ENCODE measurements at regions of chr22 and their contacts with region 1.

Region 1: DNA sequence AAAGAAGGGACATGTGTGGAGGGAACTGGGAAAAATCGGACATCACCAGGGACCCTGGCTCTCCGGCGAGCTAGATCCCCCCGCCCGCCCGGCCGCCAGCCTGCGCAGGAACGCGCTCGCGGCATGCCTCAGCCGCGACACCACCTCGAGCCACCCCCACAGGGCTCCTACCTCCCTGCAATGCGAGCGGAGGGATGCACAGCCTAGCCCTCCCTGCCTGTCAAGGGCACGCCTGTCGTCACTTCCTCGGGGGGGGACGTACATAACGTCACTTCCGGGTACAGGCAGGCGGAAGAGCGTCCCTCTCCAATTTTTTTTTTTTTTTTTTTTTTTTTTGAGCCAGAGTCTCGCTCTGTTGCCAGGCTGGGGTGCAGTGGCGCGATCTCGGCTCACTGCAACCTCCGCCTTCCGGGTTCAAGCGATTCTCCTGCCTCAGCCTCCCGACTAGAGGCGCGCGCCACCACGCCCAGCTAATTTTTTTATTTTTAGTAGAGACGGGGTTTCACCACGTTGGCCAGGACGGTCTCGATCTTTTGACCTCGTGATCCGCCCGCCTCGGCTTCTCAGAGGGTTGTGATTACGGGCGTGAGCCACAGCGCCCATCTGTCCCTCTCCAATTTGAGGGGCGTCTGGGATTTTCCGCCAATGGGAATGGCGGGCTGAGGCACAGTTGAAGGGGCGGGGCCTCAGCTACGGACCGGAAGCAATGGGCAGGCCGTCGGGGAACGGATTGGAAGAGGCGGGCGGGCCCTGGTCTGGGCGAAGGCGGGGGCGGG is at the start of gene TXN2:
- DNase-seq: peak; percentile 94
- ATAC-seq: peak; percentile 87
- H3K4me3 Mint-ChIP-seq: peak within 1 kb of the TSS; percentile 92
- H3K27ac Mint-ChIP-seq: peak within 1 kb of the TSS; percentile 91
- H3K4me1 Mint-ChIP-seq: peaks cover 18% of the 10 kb centered on the region
- H3K27me3 Mint-ChIP-seq: no peaks in the 10 kb centered on the region
- CTCF ChIP-seq: no peak
- total RNA-seq, gene TXN2: 59.1 and 71.7 TPM in 2 replicates

Region 2: GRCh38 chr22:36110306-36110881 is 371.2 kb before region 1 on chr22:
- CTCF ChIA-PET with region 1: no interaction called
- POLR2A ChIA-PET with region 1: no interaction called
- intact Hi-C with region 1: no loop called
- DNase-seq: no peak
- ATAC-seq: no peak
- H3K4me3 Mint-ChIP-seq: no peak overlapping the region
- H3K27ac Mint-ChIP-seq: no peak overlapping the region
- H3K4me1 Mint-ChIP-seq: no peaks in the 10 kb centered on the region
- H3K27me3 Mint-ChIP-seq: peaks cover 9% of the 10 kb centered on the region
- CTCF ChIP-seq: no peak

Region 3: GRCh38 chr22:36286471-36287224 is 194.9 kb before region 1 on chr22:
- CTCF ChIA-PET with region 1: interaction called, 4 read pairs
- POLR2A ChIA-PET with region 1: interaction called, 11 read pairs
- intact Hi-C with region 1: no loop called
- DNase-seq: peak; percentile 57
- ATAC-seq: peak; percentile 88
- H3K4me3 Mint-ChIP-seq: no peak overlapping the region
- H3K27ac Mint-ChIP-seq: peak overlapping the region; percentile 50
- H3K4me1 Mint-ChIP-seq: no peaks in the 10 kb centered on the region
- H3K27me3 Mint-ChIP-seq: no peaks in the 10 kb centered on the region
- CTCF ChIP-seq: no peak

Region 4: GRCh38 chr22:36454916-36455570 is 26.5 kb before region 1 on chr22:
- CTCF ChIA-PET with region 1: no interaction called
- POLR2A ChIA-PET with region 1: interaction called, 22 read pairs
- intact Hi-C with region 1: loop called (anchors 1 kb)
- DNase-seq: peak; percentile 91
- ATAC-seq: peak; percentile 66
- H3K4me3 Mint-ChIP-seq: peak overlapping the region; percentile 69
- H3K27ac Mint-ChIP-seq: peak overlapping the region; percentile 95
- H3K4me1 Mint-ChIP-seq: peaks cover 56% of the 10 kb centered on the region
- H3K27me3 Mint-ChIP-seq: no peaks in the 10 kb centered on the region
- CTCF ChIP-seq: no peak

Region 5: GRCh38 chr22:36493690-36494110 is 12.1 kb after region 1 on chr22:
- CTCF ChIA-PET with region 1: interaction called, 3 read pairs
- POLR2A ChIA-PET with region 1: interaction called, 40 read pairs
- intact Hi-C with region 1: loop called (anchors 1 kb)
- DNase-seq: peak; percentile 41
- ATAC-seq: peak; percentile 86
- H3K4me3 Mint-ChIP-seq: peak overlapping the region; percentile 67
- H3K27ac Mint-ChIP-seq: peak overlapping the region; percentile 79
- H3K4me1 Mint-ChIP-seq: peaks cover 26% of the 10 kb centered on the region
- H3K27me3 Mint-ChIP-seq: no peaks in the 10 kb centered on the region
- CTCF ChIP-seq: no peak

Region 6: GRCh38 chr22:36528795-36529751 is 47.5 kb after region 1 on chr22 and contains the start of gene EIF3D:
- CTCF ChIA-PET with region 1: no interaction called
- POLR2A ChIA-PET with region 1: interaction called, 36 read pairs
- intact Hi-C with region 1: loop called (anchors 1 kb)
- DNase-seq: peak; percentile 96
- ATAC-seq: peak; percentile 92
- H3K4me3 Mint-ChIP-seq: peak within 1 kb of the TSS; percentile 94
- H3K27ac Mint-ChIP-seq: peak within 1 kb of the TSS; percentile 97
- H3K4me1 Mint-ChIP-seq: peaks cover 25% of the 10 kb centered on the region
- H3K27me3 Mint-ChIP-seq: no peaks in the 10 kb centered on the region
- CTCF ChIP-seq: no peak
- total RNA-seq, gene EIF3D: 285 and 301 TPM in 2 replicates